ENCODE measurements at regions of chr9 and their contacts with region 1.

Region 1: GRCh38 chr9:16496908-16497307 is 373.6 kb downstream of the BNC2 start:
- DNase-seq: no peak
- ATAC-seq: no peak
- H3K4me3 ChIP-seq: no peak overlapping the region
- H3K27ac ChIP-seq: no peak overlapping the region
- H3K4me1 ChIP-seq: no peaks in the 10 kb centered on the region
- H3K27me3 ChIP-seq: no peaks in the 10 kb centered on the region
- CTCF ChIP-seq: no peak
- POLR2A ChIP-seq: no peak

Region 2: GRCh38 chr9:16425562-16426231 is 71.2 kb before region 1 on chr9:
- intact Hi-C with region 1: no loop called
- DNase-seq: no peak
- ATAC-seq: no peak
- H3K4me3 ChIP-seq: no peak overlapping the region
- H3K27ac ChIP-seq: no peak overlapping the region
- H3K4me1 ChIP-seq: no peaks in the 10 kb centered on the region
- H3K27me3 ChIP-seq: no peaks in the 10 kb centered on the region
- CTCF ChIP-seq: no peak
- POLR2A ChIP-seq: no peak

Region 3: DNA sequence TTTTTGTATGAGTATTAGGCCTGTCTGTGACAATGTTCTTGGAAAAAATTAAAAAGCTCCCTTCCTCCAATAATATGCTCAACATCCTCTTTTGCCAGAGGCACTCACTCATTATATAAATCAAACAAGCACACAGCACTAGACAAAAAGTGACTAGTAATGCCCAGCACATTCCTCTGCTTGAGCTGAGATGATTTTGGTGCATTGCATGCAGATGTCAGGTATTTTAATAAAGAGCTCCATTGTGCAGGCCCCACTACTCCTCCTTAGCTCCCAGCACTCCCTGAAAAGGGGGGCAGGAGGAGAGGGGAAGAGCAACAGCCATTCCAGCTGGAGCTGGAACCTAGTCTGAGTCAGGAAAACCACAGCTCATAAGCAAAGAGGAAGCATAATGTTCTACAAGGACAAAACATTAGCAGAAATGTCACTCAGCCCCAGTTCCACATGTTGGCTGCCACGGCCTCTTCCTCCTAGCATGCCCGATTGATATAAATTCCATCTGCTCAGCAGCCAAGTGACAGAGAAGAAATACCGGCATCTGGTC is 25.0 kb after region 1 on chr9:
- intact Hi-C with region 1: loop called in 1 of 10 experiments (anchors 2 kb)
- DNase-seq: peak in 4 of 5 donors; percentile 42 to 58 (median 48)
- ATAC-seq: peak; percentile 78 to 93 (median 92)
- H3K4me3 ChIP-seq: no peak overlapping the region
- H3K27ac ChIP-seq: peak overlapping the region in 8 of 12 donors; percentile 35 to 72 (median 64)
- H3K4me1 ChIP-seq: peaks cover 0 to 33% (median 5%) of the 10 kb centered on the region in 12 donors
- H3K27me3 ChIP-seq: peaks cover 0 to under 1% (median 0%) of the 10 kb centered on the region in 9 donors
- CTCF ChIP-seq: no peak
- POLR2A ChIP-seq: no peak

Region 4: DNA sequence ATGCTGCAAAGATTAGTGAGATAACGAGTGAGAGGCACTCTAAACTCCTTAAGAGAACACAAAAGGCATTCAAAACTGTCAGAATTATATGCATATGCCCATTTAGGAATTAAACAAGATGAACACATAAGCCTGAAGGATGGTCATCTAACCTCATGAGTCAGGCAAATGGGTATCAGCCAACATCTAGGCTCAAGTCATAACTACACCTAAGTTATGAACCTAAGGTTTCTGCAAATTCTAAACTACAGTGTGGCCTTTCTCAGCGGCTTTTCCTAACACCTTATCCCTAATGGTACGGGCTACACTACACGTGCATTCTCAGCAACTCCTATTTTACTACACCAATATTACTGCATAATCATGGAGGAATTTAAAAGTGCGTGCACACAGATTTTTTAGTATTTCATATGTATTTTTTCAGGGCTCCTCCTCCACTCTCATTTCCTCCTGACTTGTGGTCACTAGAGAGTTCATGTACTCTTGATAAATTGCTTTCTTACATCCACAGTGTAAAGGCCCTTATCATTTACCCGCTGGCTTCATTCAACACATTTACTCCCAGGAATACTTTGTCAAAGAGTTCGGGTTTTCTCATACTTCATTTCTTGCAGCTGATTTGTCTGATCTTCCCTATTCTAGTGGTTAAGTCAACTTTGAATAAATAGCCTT is 57.1 kb after region 1 on chr9:
- intact Hi-C with region 1: loop called in 1 of 10 experiments (anchors 10 kb)
- DNase-seq: no peak
- ATAC-seq: no peak
- H3K4me3 ChIP-seq: no peak overlapping the region
- H3K27ac ChIP-seq: no peak overlapping the region
- H3K4me1 ChIP-seq: no peaks in the 10 kb centered on the region
- H3K27me3 ChIP-seq: no peaks in the 10 kb centered on the region
- CTCF ChIP-seq: no peak
- POLR2A ChIP-seq: no peak

Region 5: DNA sequence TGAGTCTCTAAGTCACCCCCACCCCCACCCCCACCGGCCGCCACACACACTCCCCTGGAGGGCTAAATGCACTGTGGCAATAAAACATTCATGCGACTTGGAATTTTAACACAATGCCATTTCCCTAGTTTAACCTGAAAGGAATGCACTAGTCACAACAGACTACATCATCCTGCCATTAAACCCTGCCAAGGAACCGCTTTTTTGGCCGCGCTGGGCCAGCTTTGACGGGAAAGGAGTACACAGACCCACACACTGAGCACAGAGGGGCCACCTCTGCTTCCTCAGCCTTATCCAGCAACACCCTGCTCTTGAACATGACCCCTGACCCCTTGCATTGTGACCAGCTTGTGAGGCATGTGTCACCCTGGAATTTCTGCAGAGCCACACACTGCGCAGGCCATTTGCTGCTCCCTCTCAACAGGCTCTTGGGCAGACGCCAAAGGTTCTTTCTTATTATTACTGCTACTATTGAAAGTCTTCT is 208.3 kb after region 1 on chr9:
- intact Hi-C with region 1: no loop called
- DNase-seq: peak; percentile 76 to 92 (median 86)
- ATAC-seq: peak; percentile 93 to 98 (median 96)
- H3K4me3 ChIP-seq: peak overlapping the region in 7 of 12 donors; percentile 32 to 55 (median 48)
- H3K27ac ChIP-seq: peak overlapping the region; percentile 75 to 92 (median 86)
- H3K4me1 ChIP-seq: peaks cover 0 to 38% (median 6%) of the 10 kb centered on the region in 12 donors
- H3K27me3 ChIP-seq: peaks cover 0 to 10% (median 0%) of the 10 kb centered on the region in 9 donors
- CTCF ChIP-seq: no peak
- POLR2A ChIP-seq: no peak

Measured in heart left ventricle (tissue), 16 donors.